Ascending aorta (tissue), 2 donors: ENCODE measurements at regions of chr5 and their contacts with region 1.

Region 1: DNA sequence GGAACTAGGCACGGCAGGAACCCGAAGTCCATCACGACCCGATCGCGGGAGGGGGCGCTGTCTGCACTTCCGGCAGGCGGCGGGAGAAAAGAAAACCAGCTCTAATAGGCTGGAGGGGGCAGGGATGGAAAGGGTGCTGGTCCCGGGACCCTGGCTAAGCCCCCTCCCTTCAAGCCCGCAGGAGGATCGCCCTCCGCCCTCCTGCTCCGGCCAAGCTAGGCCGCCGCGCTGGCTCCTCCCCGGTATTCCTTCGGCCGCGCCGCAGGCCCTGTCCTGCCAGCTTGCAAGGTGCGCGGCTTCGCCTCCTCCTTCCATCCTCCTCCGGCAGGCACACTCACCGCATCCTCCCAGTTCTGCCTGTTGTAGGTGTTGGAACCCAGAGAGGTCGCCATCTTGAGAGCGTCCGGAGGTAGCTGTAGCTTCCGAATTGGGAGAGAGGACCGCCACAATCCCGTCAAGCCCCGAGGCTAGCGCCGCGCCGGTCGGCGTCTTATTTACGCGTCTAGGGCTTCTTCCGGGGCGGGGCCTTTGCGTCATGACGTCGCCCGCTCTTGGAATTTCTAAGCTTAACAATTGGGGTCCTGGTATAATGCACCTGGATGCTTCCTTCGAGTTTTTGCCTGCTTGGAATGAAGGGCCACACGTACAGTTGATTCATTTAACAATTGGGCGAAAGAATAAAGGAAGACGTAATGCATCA is at the start of gene RBM22:
- DNase-seq: peak; percentile 68 to 96
- H3K4me3 ChIP-seq: peak within 1 kb of the TSS; percentile 95 to 100
- H3K27ac ChIP-seq: peak within 1 kb of the TSS; percentile 97 to 99
- H3K4me1 ChIP-seq: peaks cover 4 to 10% of the 10 kb centered on the region in 2 donors
- H3K27me3 ChIP-seq: no peaks in the 10 kb centered on the region
- CTCF ChIP-seq: peak; percentile 62 to 78 (median 64)
- total RNA-seq, gene RBM22: 45.3 TPM

Region 2: GRCh38 chr5:150449517-150450339 is 251.0 kb before region 1 on chr5 and contains the start of gene RPS14:
- intact Hi-C with region 1: loop called (anchors 5 kb)
- DNase-seq: peak; percentile 78 to 94
- H3K4me3 ChIP-seq: peak within 1 kb of the TSS; percentile 67 to 71
- H3K27ac ChIP-seq: peak within 1 kb of the TSS; percentile 93 to 94
- H3K4me1 ChIP-seq: peaks cover 4 to 10% of the 10 kb centered on the region in 2 donors
- H3K27me3 ChIP-seq: no peaks in the 10 kb centered on the region
- CTCF ChIP-seq: peak; percentile 90 to 96 (median 94)
- total RNA-seq, gene RPS14: 1,928 TPM

Region 3: GRCh38 chr5:150560401-150561193 is 140.1 kb before region 1 on chr5:
- intact Hi-C with region 1: loop called (anchors 2 kb)
- DNase-seq: peak; percentile 35 to 95
- H3K4me3 ChIP-seq: no peak overlapping the region
- H3K27ac ChIP-seq: no peak overlapping the region
- H3K4me1 ChIP-seq: peaks cover 0 to 6% of the 10 kb centered on the region in 2 donors
- H3K27me3 ChIP-seq: no peaks in the 10 kb centered on the region
- CTCF ChIP-seq: peak; percentile 89

Region 4: GRCh38 chr5:150625819-150626746 is 74.7 kb before region 1 on chr5:
- intact Hi-C with region 1: no loop called
- DNase-seq: no peak
- H3K4me3 ChIP-seq: peak overlapping the region; percentile 81 to 95
- H3K27ac ChIP-seq: peak overlapping the region; percentile 96 to 99
- H3K4me1 ChIP-seq: peaks cover 24 to 62% of the 10 kb centered on the region in 2 donors
- H3K27me3 ChIP-seq: no peaks in the 10 kb centered on the region
- CTCF ChIP-seq: no peak

Region 5: DNA sequence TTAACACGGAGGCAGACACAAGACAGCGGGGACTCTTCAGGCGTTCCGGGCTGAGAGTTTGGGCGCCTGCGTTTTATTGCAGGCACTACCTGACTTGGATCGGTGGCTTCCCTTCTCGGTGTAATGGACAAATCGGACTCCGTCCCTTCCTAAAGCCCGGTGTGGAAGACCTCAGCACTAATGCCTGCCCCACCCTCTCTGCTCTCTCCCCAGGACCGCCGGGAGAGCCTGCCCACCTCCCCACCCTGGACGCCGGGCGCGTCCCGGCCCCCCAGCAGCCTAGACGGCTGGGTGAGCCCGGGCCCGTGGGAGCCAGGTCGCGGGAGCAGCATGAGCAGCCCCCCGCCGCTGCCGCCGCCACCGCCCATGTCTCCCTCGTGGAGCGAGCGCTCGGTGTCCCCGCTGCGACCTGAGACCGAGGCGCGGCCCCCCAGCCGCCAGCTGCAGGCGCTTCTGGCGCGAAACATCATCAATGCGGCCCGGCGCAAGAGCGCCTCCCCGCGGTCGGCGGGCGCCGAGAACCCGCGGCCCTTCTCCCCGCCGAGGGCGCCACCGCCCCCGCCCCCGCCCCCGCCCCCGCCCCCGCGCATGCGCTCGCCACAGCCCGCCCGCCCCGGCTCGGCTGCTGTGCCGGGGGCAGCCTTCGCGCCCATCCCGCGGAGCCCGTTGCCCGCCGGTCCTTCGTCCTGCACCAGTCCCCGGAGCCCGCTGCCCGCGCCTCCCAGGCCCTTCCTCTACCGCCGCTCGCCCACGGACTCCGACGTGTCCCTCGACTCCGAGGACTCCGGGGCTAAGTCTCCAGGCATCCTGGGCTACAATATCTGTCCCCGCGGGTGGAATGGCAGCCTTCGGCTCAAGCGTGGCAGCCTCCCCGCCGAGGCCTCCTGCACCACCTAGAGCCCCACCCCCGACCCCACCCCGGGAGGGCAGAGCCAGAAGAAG is 44.3 kb before region 1 on chr5:
- intact Hi-C with region 1: loop called (anchors 5 kb)
- DNase-seq: no peak
- H3K4me3 ChIP-seq: peak overlapping the region; percentile 44 to 59
- H3K27ac ChIP-seq: peak overlapping the region; percentile 86 to 90
- H3K4me1 ChIP-seq: peaks cover 19 to 56% of the 10 kb centered on the region in 2 donors
- H3K27me3 ChIP-seq: no peaks in the 10 kb centered on the region
- CTCF ChIP-seq: peak; percentile 39 to 66 (median 58)

Region 6: DNA sequence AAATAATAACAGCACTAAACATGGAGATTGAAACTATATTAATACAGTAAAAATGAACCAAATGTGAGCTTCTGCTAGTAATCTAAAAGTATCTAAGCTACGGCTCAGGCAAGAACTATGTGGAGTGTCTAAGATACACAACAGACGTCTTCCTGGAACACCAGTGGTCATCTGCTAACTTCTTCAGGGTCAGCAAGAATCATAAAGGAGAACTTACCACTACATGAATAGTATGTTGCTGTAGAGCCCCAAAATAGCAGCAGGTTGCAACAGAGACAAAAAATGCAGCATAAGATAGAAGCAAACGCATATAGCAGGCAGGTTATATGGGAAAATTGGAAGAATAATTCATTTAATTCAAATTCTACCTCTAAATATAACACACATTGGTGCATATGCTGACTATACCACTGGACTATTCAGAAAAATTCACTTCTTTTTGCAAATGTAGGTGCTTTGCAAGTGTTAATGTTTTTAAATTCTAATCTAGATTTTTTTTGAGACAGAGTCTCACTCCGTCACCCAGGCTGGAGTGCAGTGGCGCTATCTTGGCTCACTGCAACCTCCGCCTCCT is 31.0 kb after region 1 on chr5:
- intact Hi-C with region 1: no loop called
- DNase-seq: no peak
- H3K4me3 ChIP-seq: no peak overlapping the region
- H3K27ac ChIP-seq: peak overlapping the region; percentile 2 to 43
- H3K4me1 ChIP-seq: no peaks in the 10 kb centered on the region
- H3K27me3 ChIP-seq: no peaks in the 10 kb centered on the region
- CTCF ChIP-seq: no peak

Region 7: DNA sequence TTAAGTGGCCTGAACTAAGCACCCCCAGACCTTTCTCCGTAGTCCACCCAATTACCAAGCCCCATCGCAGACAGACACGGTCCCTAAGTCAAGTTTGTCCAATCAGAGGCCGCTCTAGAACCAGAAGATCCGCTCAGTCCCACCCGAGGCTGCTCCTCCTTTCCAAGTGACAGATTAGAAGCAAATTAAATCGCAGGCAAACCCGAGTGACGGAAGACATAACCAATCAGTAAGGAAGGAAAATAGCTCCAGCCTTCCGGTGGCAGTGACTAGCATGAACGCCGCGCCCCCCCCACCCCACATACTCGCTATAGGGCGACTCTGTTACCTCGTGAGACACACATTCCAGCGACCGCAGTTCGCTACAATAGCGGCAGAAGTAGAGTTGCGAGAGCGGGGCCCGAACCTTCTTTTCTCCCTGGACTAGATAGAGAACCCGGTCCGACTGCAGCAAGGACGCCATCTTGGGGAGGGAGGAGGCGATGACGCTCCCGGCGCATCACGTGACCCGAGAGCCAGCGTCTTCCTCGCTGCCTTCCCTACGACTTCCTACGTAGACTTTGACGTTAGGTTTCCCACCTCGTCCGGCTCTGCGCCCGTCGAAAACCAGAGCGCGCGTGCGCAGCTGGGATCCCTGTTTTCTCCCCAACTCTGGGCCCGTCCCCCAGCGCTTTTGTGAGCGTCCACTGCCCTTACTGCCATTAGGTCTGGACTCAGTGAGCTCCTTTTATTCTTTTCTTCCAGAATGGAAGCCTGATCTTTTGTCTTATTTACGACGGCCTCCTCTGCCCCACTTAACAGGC is 58.0 kb after region 1 on chr5 and contains the start of gene DCTN4:
- intact Hi-C with region 1: loop called (anchors 1 kb)
- DNase-seq: peak; percentile 93 to 98
- H3K4me3 ChIP-seq: peak within 1 kb of the TSS; percentile 73 to 74
- H3K27ac ChIP-seq: peak within 1 kb of the TSS; percentile 93 to 95
- H3K4me1 ChIP-seq: peaks cover 4 to 30% of the 10 kb centered on the region in 2 donors
- H3K27me3 ChIP-seq: no peaks in the 10 kb centered on the region
- CTCF ChIP-seq: peak in 1 of 3 experiments; percentile 9
- total RNA-seq, gene DCTN4: 28.1 TPM

Region 8: DNA sequence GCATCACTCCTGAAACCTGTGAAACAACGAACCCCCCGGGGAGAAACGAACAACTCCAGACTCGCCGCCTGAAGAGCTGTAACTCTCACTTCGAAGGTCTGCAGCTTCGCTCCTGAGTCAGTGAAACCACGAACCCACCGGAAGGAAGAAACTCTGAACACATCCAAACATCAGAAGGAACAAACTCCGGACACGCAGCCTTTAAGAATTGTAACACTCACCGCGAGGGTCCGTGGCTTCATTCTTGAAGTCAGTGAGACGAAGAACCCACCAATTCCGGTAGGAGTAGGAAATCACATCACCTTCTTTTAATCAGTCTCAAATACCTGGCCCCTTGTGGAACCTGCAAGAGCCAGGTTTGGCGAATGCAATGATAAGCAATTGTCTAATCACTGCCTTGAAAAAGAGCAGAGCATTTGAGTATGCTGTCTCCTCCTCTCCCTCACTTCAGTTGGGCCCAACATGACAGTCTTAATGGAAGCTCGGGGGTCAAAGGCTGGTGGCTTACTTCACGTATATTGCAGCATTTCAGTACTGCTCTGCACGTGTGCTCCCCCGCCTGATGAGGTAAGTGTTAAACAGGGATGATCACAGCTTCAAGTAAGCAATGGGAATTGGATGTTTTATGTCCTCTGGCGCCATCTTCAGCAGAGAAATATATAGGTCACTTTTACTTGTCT is 146.1 kb after region 1 on chr5:
- intact Hi-C with region 1: loop called (anchors 10 kb)
- DNase-seq: peak; percentile 18 to 64
- H3K4me3 ChIP-seq: peak overlapping the region in 1 of 2 donors; percentile 21
- H3K27ac ChIP-seq: no peak overlapping the region
- H3K4me1 ChIP-seq: no peaks in the 10 kb centered on the region
- H3K27me3 ChIP-seq: no peaks in the 10 kb centered on the region
- CTCF ChIP-seq: peak; percentile 47 to 81 (median 70)

Region 9: GRCh38 chr5:151030400-151030799 is 329.7 kb after region 1 on chr5:
- intact Hi-C with region 1: no loop called
- DNase-seq: peak in 1 of 2 donors; percentile 83
- H3K4me3 ChIP-seq: no peak overlapping the region
- H3K27ac ChIP-seq: peak overlapping the region; percentile 61 to 74
- H3K4me1 ChIP-seq: peaks cover 3 to 4% of the 10 kb centered on the region in 2 donors
- H3K27me3 ChIP-seq: no peaks in the 10 kb centered on the region
- CTCF ChIP-seq: no peak